Prostate gland (tissue), 2 donors: ENCODE measurements at regions of chr2 and their contacts with region 1.

Region 1: DNA sequence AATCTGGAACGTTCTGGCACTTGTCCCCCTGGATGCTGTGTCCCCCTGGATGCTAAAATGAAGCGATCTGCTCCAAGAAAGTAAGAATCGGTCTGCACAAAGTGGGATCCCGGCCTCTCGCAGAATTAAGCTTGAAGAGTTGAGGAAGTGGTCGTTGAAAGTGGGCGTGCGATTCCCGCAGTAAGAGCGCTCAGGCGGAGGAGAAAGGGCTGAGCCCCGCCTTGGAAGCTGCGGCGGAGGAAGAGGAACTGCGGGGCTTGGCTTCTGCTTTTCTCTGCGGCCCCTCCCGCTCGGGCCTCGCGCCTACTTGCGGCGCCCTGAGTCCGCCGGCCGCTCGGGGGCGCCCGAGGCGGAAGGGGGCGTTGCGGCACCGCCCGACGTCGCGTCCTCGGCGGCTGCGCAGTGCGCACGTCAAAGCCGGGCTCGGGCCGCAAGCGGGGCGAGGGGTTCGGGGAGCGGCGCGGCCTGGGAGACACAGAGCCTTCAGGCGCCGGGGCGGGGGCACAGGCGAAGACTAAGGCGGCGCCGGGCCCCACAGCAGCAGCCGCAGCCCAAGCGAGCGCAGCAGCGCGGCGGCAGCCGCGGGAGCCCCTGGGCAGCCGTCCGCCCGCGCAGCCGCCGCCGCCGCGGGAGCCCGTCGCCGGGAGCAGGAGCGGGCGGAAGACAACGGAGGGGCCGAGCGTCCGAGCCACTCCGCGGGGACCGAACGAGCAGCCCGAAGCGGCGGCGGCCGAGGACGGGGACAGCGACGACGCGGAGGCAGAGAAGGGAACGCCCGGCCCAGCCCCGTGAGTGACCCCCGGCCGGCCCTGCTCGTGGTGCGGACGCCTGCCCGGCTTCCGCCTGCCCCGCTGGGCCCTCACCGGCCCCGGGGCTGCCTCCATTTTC is at the start of gene CAB39:
- DNase-seq: peak; percentile 83
- H3K4me3 ChIP-seq: peak within 1 kb of the TSS; percentile 96 to 98
- H3K27ac ChIP-seq: peak within 1 kb of the TSS; percentile 89 to 94
- H3K4me1 ChIP-seq: peaks cover 7% of the 10 kb centered on the region
- H3K27me3 ChIP-seq: no peaks in the 10 kb centered on the region
- CTCF ChIP-seq: peak; percentile 62 to 97 (median 93)
- POLR2A ChIP-seq: peak; percentile 86
- total RNA-seq, gene CAB39: 75.4 to 105 TPM

Region 2: GRCh38 chr2:230411570-230412370 is 300.9 kb before region 1 on chr2:
- intact Hi-C with region 1: loop called (anchors 10 kb)
- DNase-seq: peak; percentile 48
- H3K4me3 ChIP-seq: peak overlapping the region; percentile 48 to 59
- H3K27ac ChIP-seq: peak overlapping the region; percentile 87 to 91
- H3K4me1 ChIP-seq: peaks cover 6% of the 10 kb centered on the region
- H3K27me3 ChIP-seq: no peaks in the 10 kb centered on the region
- CTCF ChIP-seq: peak in 2 of 4 experiments; percentile 7 to 14
- POLR2A ChIP-seq: peak; percentile 36

Region 3: DNA sequence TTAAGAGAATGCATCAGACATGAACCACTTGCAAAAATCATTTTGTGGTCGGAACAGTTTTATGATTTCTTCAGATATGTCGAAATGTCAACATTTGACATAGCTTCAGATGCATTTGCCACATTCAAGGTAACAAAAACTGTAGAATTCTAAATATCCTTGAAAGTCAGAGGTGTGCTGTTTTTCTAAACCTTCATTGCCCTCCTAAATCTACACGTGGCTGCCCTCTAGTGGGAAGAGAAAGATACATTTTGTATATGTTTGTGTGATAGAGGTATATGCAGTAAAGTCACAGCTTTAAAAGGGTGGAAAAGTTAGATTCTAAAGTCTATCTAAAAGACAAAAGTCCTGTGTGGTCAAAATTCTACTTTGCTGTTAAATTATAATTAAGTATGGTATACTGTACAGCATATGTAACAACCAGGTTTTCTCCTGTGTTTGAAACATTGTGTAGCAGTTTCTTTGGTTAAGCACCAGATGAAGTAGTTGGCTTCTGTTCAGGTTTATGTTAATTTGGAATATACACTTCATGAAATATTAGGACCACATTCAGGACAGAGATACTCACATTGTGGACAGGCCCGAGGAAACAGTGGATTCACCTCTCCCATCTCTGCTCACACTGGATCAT is 86.2 kb after region 1 on chr2:
- intact Hi-C with region 1: loop called (anchors 1 kb)
- DNase-seq: peak; percentile 43
- H3K4me3 ChIP-seq: no peak overlapping the region
- H3K27ac ChIP-seq: no peak overlapping the region
- H3K4me1 ChIP-seq: peaks cover 7% of the 10 kb centered on the region
- H3K27me3 ChIP-seq: no peaks in the 10 kb centered on the region
- CTCF ChIP-seq: peak; percentile 25 to 77 (median 60)
- POLR2A ChIP-seq: no peak